ENCODE measurements at regions of chr18 and their contacts with region 1.

Region 1: DNA sequence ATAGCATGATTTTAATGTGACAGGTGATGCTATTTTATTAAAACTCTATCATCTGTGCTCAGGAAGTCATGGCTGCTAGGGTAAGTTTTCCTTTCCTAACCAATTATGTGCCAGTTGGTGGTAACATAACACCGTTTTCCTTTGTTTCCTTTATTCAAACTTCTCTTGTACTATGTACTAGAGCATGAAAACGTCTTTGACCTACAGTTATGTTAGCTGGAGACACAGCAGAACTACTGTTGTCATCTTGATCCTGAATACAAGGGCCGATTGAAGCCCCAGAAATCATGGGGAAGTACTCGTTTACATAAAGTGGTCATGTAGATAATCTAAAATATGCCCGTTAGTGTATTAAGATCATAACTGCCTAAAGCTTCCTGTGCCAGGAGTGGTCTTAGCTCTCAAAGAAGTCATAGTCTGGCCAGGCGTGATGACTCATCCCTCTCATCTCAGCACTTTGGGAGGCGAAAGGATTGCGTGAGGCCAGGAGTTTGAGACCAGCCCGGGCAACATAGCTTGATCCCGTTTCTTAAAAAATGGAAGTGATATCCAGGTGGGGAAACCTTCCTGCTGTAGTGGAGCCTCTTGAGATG is 20.5 kb downstream of the NEDD4L start:
- DNase-seq: no peak
- H3K4me3 Mint-ChIP-seq: no peak overlapping the region
- H3K27ac Mint-ChIP-seq: no peak overlapping the region
- H3K4me1 Mint-ChIP-seq: no peaks in the 10 kb centered on the region
- H3K27me3 Mint-ChIP-seq: no peaks in the 10 kb centered on the region
- CTCF ChIP-seq: no peak

Region 2: GRCh38 chr18:58051765-58052460 is 12.6 kb before region 1 on chr18:
- CTCF ChIA-PET with region 1: interaction called, 19 read pairs
- POLR2A ChIA-PET with region 1: interaction called, 8 read pairs
- intact Hi-C with region 1: no loop called
- DNase-seq: peak; percentile 42
- H3K4me3 Mint-ChIP-seq: no peak overlapping the region
- H3K27ac Mint-ChIP-seq: peak overlapping the region; percentile 16
- H3K4me1 Mint-ChIP-seq: peaks cover 23% of the 10 kb centered on the region
- H3K27me3 Mint-ChIP-seq: no peaks in the 10 kb centered on the region
- CTCF ChIP-seq: peak; percentile 35

Region 3: GRCh38 chr18:58484989-58485981 is 420.8 kb after region 1 on chr18:
- CTCF ChIA-PET with region 1: no interaction called
- POLR2A ChIA-PET with region 1: no interaction called
- intact Hi-C with region 1: no loop called
- DNase-seq: no peak
- H3K4me3 Mint-ChIP-seq: no peak overlapping the region
- H3K27ac Mint-ChIP-seq: no peak overlapping the region
- H3K4me1 Mint-ChIP-seq: no peaks in the 10 kb centered on the region
- H3K27me3 Mint-ChIP-seq: peaks cover 27% of the 10 kb centered on the region
- CTCF ChIP-seq: no peak

Measured in MCF 10A (cell line).